ENCODE measurements at regions of chr17 and their contacts with region 1.

Region 1: DNA sequence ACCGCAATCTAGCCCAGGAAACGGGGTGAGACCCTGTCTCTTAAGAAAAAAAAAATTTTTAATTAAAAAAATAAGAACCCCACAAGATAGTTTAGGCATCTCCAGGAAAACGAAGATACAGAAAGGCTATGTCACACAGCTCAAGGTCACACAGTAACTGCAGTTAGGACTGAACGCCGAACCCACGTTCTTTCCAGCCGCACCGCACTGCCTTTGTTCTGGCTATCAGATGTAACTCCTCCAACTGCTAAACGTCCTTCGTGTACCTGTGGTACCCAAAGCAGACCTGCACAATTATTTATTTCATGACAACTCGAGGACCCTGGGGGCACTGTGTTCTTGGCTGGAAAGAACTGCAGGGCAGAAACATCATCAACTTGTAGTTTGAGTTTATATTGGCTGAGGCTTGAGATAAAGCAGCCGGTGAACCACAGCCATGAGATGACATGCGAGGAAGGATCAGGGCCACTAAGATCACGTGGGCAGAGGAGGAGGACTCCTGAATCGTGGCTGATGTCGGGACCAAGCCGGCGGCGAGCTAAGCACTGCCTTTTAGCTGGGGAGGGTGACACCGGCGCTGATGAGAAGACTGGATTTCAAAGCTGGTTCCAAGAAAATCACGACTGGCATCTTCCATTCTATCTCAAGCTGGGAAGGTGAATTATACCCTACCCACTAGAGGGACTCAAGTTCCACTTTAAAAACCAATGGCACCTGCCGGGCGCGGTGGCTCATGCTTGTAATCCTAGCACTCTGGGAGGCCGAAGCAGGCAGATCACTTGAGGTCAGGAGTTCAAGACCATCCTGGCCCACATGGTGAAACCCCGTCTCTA is 20.7 kb upstream of the MNT start:
- DNase-seq: peak in 4 of 5 donors; percentile 57 to 66 (median 59)
- H3K4me3 ChIP-seq: no peak overlapping the region
- H3K27ac ChIP-seq: peak overlapping the region in 1 of 2 donors; percentile 26
- H3K4me1 ChIP-seq: peaks cover 11% of the 10 kb centered on the region
- H3K27me3 ChIP-seq: no peaks in the 10 kb centered on the region
- CTCF ChIP-seq: no peak
- EP300 ChIP-seq: no peak
- POLR2A ChIP-seq: no peak

Region 2: GRCh38 chr17:2511462-2512369 is 90.2 kb after region 1 on chr17 and contains the start of gene METTL16:
- intact Hi-C with region 1: loop called in 1 of 4 experiments (anchors 5 kb)
- DNase-seq: peak; percentile 94 to 97 (median 96)
- H3K4me3 ChIP-seq: peak within 1 kb of the TSS; percentile 81
- H3K27ac ChIP-seq: peak within 1 kb of the TSS; percentile 31 to 86
- H3K4me1 ChIP-seq: peaks cover 11% of the 10 kb centered on the region
- H3K27me3 ChIP-seq: no peaks in the 10 kb centered on the region
- CTCF ChIP-seq: no peak
- EP300 ChIP-seq: no peak
- POLR2A ChIP-seq: peak; percentile 77
- total RNA-seq, gene METTL16: 18.4 to 69.1 (median 42.7) TPM

Measured in ovary (tissue), 10 donors.